Gastrocnemius medialis (tissue), 4 donors: ENCODE measurements at regions of chr11 and their contacts with region 1.

Region 1: DNA sequence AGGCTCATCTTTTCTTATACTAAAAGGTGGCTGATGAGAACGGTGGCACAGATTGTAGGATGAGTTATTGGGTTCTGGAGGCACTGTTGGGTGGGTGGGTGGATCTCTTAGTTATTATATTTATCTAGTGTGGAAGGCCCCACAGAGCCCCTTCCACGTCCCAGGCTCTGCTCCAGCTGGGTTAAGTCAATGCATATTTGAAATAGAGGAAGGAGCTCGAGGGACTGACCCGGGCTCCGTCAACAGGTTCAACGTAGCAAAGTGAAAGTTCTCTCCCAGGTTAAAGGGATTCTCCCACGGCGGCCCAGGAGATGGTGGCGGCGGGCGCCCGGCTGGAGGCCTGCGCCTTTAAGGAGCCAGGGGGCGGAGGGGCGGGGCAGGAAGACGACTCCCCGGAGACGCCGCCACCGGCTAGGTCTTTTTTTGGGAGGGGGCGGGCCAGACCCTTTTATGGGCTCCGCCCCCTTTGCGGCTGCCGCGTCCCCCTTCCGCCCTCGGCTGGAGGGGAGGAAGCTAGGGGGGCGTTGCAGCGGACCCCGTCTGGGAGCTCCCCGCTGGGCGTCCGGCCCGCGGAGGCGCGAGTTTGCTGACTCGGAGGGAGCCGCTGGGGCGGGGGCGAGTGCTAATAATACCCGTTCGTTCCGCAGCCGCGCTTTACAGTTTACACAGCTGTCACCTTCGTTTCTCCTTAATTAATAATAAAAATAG is 1.5 kb upstream of the INPPL1 start:
- DNase-seq: peak; percentile 94 to 96
- ATAC-seq: peak; percentile 78 to 80
- H3K4me3 ChIP-seq: peak overlapping the region; percentile 84 to 95 (median 88)
- H3K27ac ChIP-seq: peak overlapping the region; percentile 97 to 99 (median 98)
- H3K4me1 ChIP-seq: peaks cover 21 to 26% of the 10 kb centered on the region in 2 donors
- H3K27me3 ChIP-seq: no peaks in the 10 kb centered on the region
- CTCF ChIP-seq: peak in 4 of 5 experiments; percentile 3 to 63 (median 44)
- POLR2A ChIP-seq: peak; percentile 92 to 95

Region 2: DNA sequence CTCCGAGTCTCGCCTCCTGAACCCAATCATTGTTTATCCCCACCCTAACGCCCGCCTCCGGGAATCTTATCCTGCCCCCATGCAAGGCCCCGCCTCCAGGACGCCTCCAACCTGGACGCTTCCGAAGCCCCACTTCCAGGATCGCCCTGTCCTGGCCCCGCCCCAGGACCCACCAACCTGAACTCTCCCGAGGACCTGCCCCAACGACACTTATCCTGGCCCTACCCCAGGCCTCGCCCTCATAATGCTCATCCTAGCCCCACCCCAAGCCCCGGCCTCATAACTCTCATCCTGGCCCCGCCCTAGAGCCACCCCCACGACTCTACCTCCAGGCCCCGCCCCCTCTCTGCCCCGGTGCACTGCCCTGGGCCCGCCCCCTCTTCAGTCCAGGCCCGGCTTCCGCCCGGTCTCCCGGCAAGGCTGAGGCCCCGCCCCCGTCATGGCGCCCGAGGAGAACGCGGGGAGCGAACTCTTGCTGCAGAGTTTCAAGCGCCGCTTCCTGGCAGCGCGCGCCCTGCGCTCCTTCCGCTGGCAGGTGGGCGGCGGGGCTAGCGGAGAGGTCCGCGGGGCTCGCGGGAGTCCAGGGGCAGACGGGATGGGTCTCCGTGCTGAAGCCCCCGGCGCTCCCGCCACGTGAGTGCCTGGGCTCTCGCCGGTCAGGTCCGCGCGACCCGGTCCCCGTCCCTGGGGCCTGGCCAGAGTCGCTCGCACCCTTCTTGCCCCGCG is 435.8 kb before region 1 on chr11:
- in situ Hi-C with region 1: no loop called
- intact Hi-C with region 1: loop called (anchors 2 kb)
- DNase-seq: peak; percentile 21 to 91
- ATAC-seq: peak; percentile 99 to 100
- H3K4me3 ChIP-seq: peak overlapping the region; percentile 63 to 85 (median 78)
- H3K27ac ChIP-seq: peak overlapping the region; percentile 73 to 92 (median 88)
- H3K4me1 ChIP-seq: peaks cover 6% of the 10 kb centered on the region in 2 donors
- H3K27me3 ChIP-seq: no peaks in the 10 kb centered on the region
- CTCF ChIP-seq: no peak
- POLR2A ChIP-seq: peak; percentile 62 to 65

Region 3: DNA sequence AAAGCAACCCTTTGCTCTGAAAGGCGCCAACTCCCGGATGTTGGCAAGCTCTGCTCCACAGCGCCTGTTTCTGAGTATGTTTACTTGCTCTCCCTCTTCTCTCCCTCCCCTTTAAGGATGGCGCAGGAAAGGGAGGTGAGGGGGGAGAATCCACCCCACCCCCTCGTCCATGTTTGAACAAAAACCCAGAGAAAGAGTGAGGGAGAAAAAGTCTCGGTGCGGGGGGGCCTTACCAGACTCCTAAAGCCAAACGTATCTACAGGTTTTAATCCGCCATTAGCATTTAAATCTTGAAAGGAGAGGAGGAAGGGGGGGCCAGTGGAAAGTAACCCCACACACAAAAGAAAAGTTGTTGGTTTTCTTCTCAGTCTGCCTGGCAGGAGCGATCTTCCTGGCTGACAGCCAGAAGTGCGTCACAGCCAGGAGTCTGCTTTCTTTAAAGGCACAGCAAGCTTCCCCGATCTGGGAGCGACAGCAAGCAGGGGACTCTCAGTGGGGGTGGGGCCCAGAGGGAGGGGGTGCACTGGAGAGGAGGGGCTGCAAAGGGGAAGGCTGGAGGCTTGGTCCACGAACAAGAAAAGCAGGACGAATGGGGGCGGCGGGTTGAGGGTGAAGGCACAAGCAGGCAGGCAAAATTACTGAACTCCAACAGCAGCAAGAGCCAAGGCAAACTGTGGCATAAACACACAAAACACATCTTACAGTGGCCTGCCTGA is 182.2 kb before region 1 on chr11:
- in situ Hi-C with region 1: no loop called
- intact Hi-C with region 1: loop called (anchors 1 kb)
- DNase-seq: peak; percentile 91 to 94
- ATAC-seq: peak; percentile 78 to 79
- H3K4me3 ChIP-seq: peak overlapping the region; percentile 57 to 83 (median 70)
- H3K27ac ChIP-seq: peak overlapping the region; percentile 87 to 97 (median 97)
- H3K4me1 ChIP-seq: peaks cover 40 to 50% of the 10 kb centered on the region in 2 donors
- H3K27me3 ChIP-seq: no peaks in the 10 kb centered on the region
- CTCF ChIP-seq: peak in 1 of 5 experiments; percentile 22
- POLR2A ChIP-seq: peak in 1 of 2 donors; percentile 69

Region 4: DNA sequence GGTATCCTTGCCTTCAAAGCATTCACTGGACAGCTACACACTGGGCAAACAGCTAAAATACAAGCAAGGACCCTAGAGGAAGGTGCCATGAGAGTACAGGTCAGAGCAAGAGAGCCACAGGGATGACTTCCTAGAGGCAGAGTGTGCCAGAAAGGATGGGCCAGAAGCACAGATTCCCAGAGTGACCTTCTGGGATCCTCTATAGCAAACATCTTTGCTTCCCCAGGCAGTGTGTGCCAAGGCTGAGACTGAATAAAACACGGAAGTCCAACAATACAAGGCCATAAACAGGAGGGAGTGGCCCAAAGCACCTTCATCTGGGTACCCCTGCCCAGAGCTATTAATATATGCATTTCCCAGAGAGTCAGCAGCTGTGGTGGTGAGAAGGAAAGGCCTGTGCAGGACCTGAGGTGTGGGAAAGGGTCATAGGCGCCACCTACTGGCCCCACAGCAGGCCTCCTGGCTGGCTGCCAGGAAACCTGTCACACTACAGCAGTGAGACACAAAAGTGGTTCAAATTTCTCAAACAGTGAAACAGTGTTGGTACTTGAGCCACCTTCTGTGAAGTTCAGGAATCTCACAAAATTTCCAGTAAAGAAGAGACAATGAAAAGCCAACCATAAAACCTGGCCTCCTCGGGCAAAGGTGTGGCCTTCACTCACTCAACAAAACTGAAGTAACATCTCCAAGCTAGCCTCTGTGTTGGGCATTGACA is 191.0 kb after region 1 on chr11:
- in situ Hi-C with region 1: no loop called
- intact Hi-C with region 1: loop called (anchors 1 kb)
- DNase-seq: peak; percentile 70 to 77
- ATAC-seq: peak; percentile 82 to 93
- H3K4me3 ChIP-seq: no peak overlapping the region
- H3K27ac ChIP-seq: peak overlapping the region in 1 of 4 donors; percentile 45
- H3K4me1 ChIP-seq: peaks cover 11 to 17% of the 10 kb centered on the region in 2 donors
- H3K27me3 ChIP-seq: no peaks in the 10 kb centered on the region
- CTCF ChIP-seq: peak; percentile 79 to 90 (median 82)
- POLR2A ChIP-seq: no peak

Region 5: GRCh38 chr11:73141848-73142286 is 918.8 kb after region 1 on chr11:
- in situ Hi-C with region 1: no loop called
- intact Hi-C with region 1: loop called (anchors 2 kb)
- DNase-seq: peak; percentile 38 to 60
- ATAC-seq: peak; percentile 45 to 51
- H3K4me3 ChIP-seq: peak overlapping the region; percentile 93 to 99 (median 98)
- H3K27ac ChIP-seq: peak overlapping the region; percentile 92 to 99 (median 96)
- H3K4me1 ChIP-seq: peaks cover 18 to 21% of the 10 kb centered on the region in 2 donors
- H3K27me3 ChIP-seq: no peaks in the 10 kb centered on the region
- CTCF ChIP-seq: no peak
- POLR2A ChIP-seq: peak; percentile 59 to 64